ENCODE measurements at regions of chr12 and their contacts with region 1.

Region 1: DNA sequence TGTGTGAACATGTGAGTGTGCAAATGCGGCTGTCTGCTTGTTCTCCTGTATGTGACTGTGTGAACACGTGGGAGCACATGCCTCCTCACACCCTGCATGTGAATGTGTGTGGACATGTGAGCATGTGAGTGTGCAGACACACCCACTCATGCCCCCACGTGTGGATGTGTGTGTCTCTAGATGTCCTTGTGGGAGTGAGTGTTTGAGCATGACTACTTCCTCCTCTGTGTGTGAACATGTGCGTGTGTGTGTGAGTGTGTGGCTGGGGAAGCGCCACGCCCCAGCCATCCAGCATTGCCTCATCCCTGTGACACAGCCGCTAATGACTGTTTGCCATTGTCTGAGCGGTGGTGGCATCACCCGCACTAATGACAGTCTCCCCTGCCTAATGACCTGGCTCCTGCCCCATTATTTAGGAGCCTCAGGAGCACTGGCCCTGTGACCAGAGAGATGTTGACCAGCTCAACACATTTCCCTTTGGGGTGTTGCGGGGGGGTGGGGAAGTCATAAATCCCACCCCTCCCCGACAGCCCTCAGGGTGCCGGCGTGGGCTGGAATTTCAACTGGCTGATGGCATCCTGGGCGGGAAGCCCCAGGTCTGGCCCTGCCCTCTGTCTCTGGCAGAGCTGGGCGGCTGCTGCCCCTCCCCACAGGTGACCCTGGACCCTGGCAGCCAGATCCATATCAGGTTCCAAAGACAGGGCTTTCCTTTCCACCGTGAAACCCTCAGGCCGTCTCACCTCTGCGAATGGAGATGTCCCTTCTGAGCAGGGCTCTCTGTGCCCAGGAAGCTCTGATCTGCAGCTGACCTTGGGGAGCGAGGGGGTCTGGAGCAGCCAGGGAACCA is 11.5 kb upstream of the KRT80 start:
- DNase-seq: peak; percentile 63
- H3K4me3 ChIP-seq: peak overlapping the region in 1 of 2 experiments; percentile 4; a peak in 1 of 4 replicates
- H3K27ac ChIP-seq: peak overlapping the region; percentile 49 to 100
- H3K4me1 ChIP-seq: peaks cover 34 to 84% of the 10 kb centered on the region in 2 experiments
- H3K27me3 ChIP-seq: no peaks in the 10 kb centered on the region
- CTCF ChIP-seq: no peak
- EP300 ChIP-seq: peak in 1 of 2 experiments; percentile 54; a peak in 1 of 4 replicates
- RAD21 ChIP-seq: no peak

Region 2: GRCh38 chr12:52171950-52172512 is 31.3 kb before region 1 on chr12:
- CTCF ChIA-PET with region 1: no interaction called
- POLR2A ChIA-PET with region 1: interaction called, 25 read pairs
- DNase-seq: no peak
- H3K4me3 ChIP-seq: no peak overlapping the region
- H3K27ac ChIP-seq: no peak overlapping the region; a peak in 1 of 4 replicates
- H3K4me1 ChIP-seq: peaks cover 12 to 52% of the 10 kb centered on the region in 2 experiments; a peak in 2 of 4 replicates
- H3K27me3 ChIP-seq: no peaks in the 10 kb centered on the region
- CTCF ChIP-seq: peak; percentile 56
- EP300 ChIP-seq: no peak
- RAD21 ChIP-seq: peak; percentile 57

Region 3: GRCh38 chr12:52186145-52186840 is 17.0 kb before region 1 on chr12:
- CTCF ChIA-PET with region 1: no interaction called
- POLR2A ChIA-PET with region 1: interaction called, 53 read pairs
- DNase-seq: no peak
- H3K4me3 ChIP-seq: no peak overlapping the region
- H3K27ac ChIP-seq: peak overlapping the region; percentile 87 to 92
- H3K4me1 ChIP-seq: peaks cover 66 to 83% of the 10 kb centered on the region in 2 experiments
- H3K27me3 ChIP-seq: no peaks in the 10 kb centered on the region
- CTCF ChIP-seq: no peak
- EP300 ChIP-seq: peak in 1 of 2 experiments; percentile 12; a peak in 1 of 4 replicates
- RAD21 ChIP-seq: no peak

Region 4: GRCh38 chr12:52192173-52192791 is 11.0 kb before region 1 on chr12:
- CTCF ChIA-PET with region 1: no interaction called
- POLR2A ChIA-PET with region 1: interaction called, 53 read pairs
- DNase-seq: peak; percentile 85
- H3K4me3 ChIP-seq: no peak overlapping the region
- H3K27ac ChIP-seq: peak overlapping the region; percentile 87 to 88
- H3K4me1 ChIP-seq: peaks cover 53 to 66% of the 10 kb centered on the region in 2 experiments
- H3K27me3 ChIP-seq: no peaks in the 10 kb centered on the region
- CTCF ChIP-seq: no peak
- EP300 ChIP-seq: peak in 1 of 2 experiments; percentile 96; a peak in 1 of 4 replicates
- RAD21 ChIP-seq: no peak

Measured in SK-N-SH (cell line).